Thyroid gland (tissue), 4 donors: ENCODE measurements at regions of chr19 and their contacts with region 1.

Region 1: DNA sequence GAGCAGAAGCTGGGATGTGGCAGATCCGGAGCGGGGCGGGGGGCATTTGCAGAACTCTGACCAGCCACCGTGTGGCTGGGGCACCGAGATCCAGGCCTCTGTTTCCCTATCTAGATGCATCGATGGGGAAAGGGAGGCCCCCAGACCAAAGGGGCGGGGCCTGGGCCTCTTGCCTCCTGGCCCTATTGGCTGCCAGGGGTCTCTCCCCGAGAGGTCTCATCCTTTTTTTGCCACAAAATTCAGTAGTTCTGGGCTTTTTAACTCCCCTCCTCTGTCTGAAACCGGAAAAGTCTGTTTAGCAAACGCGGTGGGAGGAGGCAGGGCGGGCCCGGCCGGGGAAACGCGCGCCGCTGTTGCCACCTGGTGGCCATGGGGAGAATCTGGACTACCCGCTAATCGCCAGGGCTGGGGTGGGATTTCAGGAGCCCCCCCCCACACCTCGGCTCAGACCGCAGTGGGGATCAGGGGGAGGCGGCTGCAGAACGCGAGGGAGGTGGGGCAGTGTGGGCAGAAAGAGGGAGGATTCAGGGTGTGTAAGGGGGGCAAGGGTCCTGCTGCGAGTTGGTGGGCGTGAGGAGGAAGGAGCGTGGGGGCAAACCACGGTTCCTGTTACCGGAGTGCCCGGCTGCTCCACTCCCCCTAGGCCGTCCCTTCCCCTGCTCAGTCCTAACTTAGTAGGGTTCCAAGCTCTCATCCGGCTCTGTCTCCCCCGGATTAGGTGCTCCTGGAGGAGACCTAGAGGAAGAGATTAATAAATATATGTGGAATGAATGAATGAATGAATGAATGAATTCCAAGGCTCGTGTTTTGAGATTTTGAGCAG is 28.3 kb downstream of the IL12RB1 start:
- DNase-seq: peak; percentile 72 to 81
- H3K4me3 ChIP-seq: no peak overlapping the region
- H3K27ac ChIP-seq: peak overlapping the region; percentile 82 to 86 (median 85)
- H3K4me1 ChIP-seq: peaks cover 7 to 14% of the 10 kb centered on the region in 2 donors
- H3K27me3 ChIP-seq: no peaks in the 10 kb centered on the region
- CTCF ChIP-seq: peak; percentile 89 to 98 (median 95)
- POLR2A ChIP-seq: no peak

Region 2: GRCh38 chr19:17938092-17938845 is 120.2 kb before region 1 on chr19:
- intact Hi-C with region 1: loop called (anchors 5 kb)
- DNase-seq: peak; percentile 73 to 74
- H3K4me3 ChIP-seq: no peak overlapping the region
- H3K27ac ChIP-seq: no peak overlapping the region
- H3K4me1 ChIP-seq: peaks cover 5 to 7% of the 10 kb centered on the region in 2 donors
- H3K27me3 ChIP-seq: no peaks in the 10 kb centered on the region
- CTCF ChIP-seq: peak; percentile 62 to 93 (median 86)
- POLR2A ChIP-seq: no peak

Region 3: DNA sequence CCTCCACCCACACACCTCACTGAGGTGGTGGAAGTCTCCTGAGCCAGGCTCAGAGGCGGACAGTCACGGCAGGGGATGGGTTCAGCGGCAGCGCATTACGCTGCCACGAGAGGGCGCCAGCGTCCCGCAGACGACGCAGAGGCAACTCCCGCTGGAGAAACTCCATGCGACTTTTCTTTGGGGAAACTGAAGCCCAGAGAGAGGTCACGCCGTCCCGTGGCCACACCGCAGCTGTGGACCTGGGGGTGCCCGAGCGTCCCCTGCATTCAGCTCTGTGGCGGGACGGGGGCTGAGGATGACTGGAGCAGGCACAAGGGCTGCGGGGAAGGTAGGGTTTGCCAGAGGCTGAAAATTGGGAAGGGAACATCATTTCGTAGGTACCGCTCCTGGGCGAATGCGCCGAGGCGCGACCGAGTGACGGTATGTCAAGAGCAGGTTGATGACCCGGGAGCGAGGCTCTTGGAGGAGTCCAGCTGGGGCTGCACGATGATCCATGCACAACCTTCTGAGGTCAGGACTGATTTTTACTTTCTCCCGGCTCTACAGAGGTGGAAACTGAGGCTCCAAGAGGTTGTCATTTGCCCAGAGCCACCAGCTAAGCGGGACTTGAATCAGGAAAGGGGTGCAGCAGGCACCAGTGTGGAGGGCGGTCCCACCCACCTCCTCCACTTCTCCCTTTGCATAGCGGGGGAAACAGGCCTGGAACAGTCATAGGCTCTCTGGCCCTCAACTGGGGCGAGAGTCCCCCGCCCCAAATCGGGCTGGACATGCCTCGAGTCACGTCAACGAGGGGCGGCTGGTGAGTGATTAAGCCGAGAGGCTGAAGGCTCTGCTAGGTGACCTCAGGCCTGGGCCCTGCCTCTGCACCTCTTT is 51.1 kb before region 1 on chr19:
- intact Hi-C with region 1: loop called (anchors 2 kb)
- DNase-seq: peak; percentile 78 to 84
- H3K4me3 ChIP-seq: peak overlapping the region; percentile 10 to 58 (median 18)
- H3K27ac ChIP-seq: peak overlapping the region; percentile 91 to 93 (median 92)
- H3K4me1 ChIP-seq: peaks cover 0 to 23% of the 10 kb centered on the region in 2 donors
- H3K27me3 ChIP-seq: no peaks in the 10 kb centered on the region
- CTCF ChIP-seq: peak; percentile 90 to 98 (median 96)
- POLR2A ChIP-seq: peak in 1 of 2 donors; percentile 62

Region 4: GRCh38 chr19:18203863-18204393 is 145.5 kb after region 1 on chr19 and contains the start of gene RAB3A:
- intact Hi-C with region 1: no loop called
- DNase-seq: peak; percentile 100
- H3K4me3 ChIP-seq: peak within 1 kb of the TSS; percentile 46 to 72 (median 63)
- H3K27ac ChIP-seq: peak within 1 kb of the TSS; percentile 93 to 99 (median 97)
- H3K4me1 ChIP-seq: peaks cover 17 to 19% of the 10 kb centered on the region in 2 donors
- H3K27me3 ChIP-seq: no peaks in the 10 kb centered on the region
- CTCF ChIP-seq: no peak
- POLR2A ChIP-seq: peak in 1 of 2 donors; percentile 74
- total RNA-seq, gene RAB3A: 0.40 to 2.5 (median 2.0) TPM in 3 of 4 donors, not detected in the other

Region 5: DNA sequence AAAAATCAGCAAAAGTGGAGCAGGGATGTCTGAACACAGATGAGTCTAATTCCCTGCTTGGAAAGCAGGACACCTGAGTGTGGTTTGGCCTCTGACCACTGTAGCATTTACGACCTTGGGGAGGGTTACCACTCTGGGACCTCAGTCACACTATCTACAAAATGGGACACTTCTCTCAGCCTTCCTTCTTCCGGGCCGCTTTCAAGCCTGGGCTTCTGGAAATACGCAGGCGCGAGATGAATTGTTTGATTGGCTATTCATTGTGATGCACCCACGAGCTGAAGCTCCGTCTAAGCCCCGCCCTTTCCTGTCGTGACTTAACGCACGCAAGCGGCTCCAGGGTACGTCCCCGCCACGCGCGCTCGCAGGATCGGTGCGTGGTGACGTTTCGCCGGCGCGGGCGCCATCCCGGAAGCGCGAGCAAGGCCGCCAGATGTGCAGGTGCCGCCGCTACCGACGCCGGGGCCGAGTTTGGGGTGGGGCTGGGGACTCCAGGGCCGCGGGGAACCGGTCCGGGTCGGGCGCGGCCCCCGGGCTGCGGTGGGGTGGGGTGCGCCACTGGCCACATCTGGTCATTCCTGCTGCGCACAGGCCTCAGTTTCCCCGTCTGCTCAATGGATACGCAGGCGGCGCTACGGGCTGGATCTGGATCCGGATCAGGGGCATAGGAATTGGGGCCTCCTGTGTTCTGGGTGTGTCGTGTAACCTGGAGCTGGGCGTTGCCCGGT is 499.2 kb after region 1 on chr19 and contains the start of gene KXD1:
- intact Hi-C with region 1: no loop called
- DNase-seq: peak; percentile 99
- H3K4me3 ChIP-seq: peak within 1 kb of the TSS; percentile 62 to 100 (median 98)
- H3K27ac ChIP-seq: peak within 1 kb of the TSS; percentile 90 to 95 (median 91)
- H3K4me1 ChIP-seq: peaks cover 4 to 9% of the 10 kb centered on the region in 2 donors
- H3K27me3 ChIP-seq: no peaks in the 10 kb centered on the region
- CTCF ChIP-seq: no peak
- POLR2A ChIP-seq: peak in 1 of 2 donors; percentile 74
- total RNA-seq, gene KXD1: 98.1 to 117 (median 103) TPM